Naive thymus-derived CD4-positive, alpha-beta T cell (primary cell): ENCODE measurements at regions of chr1 and their contacts with region 1.

Region 1: DNA sequence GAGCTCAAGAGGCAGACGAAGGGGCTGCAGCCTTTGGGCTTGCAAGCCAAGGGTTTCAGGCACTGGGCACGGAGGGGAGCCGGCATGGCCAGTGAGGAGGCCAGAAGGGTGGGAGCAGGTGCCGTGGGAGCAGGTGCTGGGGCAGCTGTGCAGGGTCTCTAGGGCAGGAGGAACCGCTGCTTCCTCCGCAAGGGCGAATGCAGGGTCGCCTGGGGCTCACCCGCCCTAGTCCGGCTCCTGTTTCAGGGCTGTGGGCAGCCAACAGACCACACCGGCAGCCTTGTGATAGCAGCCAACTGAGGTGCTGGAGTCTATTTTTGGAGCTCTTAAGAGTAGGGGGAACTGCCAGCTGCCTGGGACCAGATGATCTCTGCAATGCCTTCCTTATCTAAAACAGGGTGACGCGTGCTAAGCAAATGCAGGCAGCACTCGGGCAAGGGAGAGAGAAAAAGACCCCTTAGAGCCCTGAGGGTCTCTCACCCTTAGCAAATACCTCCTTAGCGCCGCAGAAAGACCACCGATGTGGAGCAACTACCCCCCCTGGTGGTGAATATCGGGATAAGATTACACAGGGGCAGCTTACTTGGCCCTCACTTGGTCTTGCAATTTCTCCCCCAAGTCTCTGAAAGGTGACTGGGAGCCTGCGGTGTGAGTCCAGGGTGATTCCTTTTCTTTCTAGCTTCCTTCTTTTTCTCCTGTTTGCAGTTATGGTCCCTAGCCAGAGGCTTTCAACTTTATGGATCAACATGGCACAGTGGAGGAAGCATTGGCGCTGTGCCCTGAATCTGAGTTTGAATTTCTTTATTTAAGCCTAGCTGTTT is 20.7 kb upstream of the MAPKAPK2 start:
- DNase-seq: peak; percentile 44 to 83 (median 68)
- ATAC-seq: peak; percentile 87
- H3K4me3 ChIP-seq: no peak overlapping the region
- H3K4me3 Mint-ChIP-seq: peak overlapping the region in 4 of 10 donors; percentile 19 to 63 (median 41)
- H3K27ac ChIP-seq: no peak overlapping the region
- H3K27ac Mint-ChIP-seq: peak overlapping the region in 1 of 9 donors; percentile 15
- H3K4me1 ChIP-seq: peaks cover 0 to 9% of the 10 kb centered on the region in 2 donors
- H3K4me1 Mint-ChIP-seq: peaks cover 3 to 35% (median 9%) of the 10 kb centered on the region in 7 donors
- H3K27me3 ChIP-seq: peaks cover 0 to 6% of the 10 kb centered on the region in 2 donors
- H3K27me3 Mint-ChIP-seq: peaks cover 8 to 31% (median 21%) of the 10 kb centered on the region in 5 donors

Region 2: DNA sequence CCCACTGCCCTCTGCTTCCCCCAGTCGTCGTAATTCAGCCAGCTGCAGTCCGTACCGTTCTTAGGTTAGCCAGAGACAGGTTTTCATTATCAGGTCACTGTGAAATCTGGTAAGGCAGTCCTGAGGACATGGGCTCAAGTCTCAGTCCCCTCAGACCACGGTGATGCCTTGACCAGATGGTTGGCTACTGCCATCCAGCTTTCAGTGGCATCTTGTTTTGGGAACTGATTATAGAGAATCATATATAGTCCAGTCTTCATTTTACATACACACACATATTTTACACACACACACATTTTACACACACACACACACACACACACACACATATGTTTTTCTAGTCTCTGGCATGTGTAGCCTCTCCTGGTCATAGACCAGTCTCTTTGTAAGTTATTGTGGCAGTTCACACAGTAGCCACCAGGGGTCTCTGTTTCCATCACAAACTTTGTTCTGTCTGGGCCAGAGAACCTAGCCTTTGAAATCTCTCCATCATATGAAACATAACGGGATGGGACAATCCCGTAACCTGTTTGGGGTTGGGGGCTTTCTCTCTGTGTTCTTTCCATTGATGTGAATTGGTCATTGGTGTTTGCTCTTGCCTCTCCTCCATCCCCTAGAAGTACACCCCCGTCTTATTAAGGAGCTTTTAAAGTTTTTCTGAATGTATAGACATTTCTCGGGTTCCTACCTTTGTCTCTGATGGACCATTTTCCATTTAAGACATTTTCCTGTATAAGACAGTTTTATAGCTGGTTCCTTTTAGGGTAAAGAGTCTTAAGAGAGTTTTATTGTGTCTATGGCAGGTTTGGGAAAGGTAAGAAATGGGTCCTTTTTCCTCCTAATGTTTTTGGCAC is 202.2 kb before region 1 on chr1:
- CTCF ChIA-PET with region 1: interaction called, 23 read pairs
- POLR2A ChIA-PET with region 1: interaction called, 3 read pairs
- intact Hi-C with region 1: loop called in 1 of 2 experiments (anchors 1 kb)
- DNase-seq: peak in 8 of 9 donors; percentile 59 to 72 (median 66)
- ATAC-seq: peak; percentile 84
- H3K4me3 ChIP-seq: no peak overlapping the region
- H3K4me3 Mint-ChIP-seq: peak overlapping the region in 1 of 10 donors; percentile 38
- H3K27ac ChIP-seq: no peak overlapping the region
- H3K27ac Mint-ChIP-seq: peak overlapping the region in 1 of 9 donors; percentile 38
- H3K4me1 ChIP-seq: peaks cover 10 to 16% of the 10 kb centered on the region in 2 donors
- H3K4me1 Mint-ChIP-seq: peaks cover 20 to 48% (median 31%) of the 10 kb centered on the region in 7 donors
- H3K27me3 ChIP-seq: no peaks in the 10 kb centered on the region
- H3K27me3 Mint-ChIP-seq: no peaks in the 10 kb centered on the region

Region 3: DNA sequence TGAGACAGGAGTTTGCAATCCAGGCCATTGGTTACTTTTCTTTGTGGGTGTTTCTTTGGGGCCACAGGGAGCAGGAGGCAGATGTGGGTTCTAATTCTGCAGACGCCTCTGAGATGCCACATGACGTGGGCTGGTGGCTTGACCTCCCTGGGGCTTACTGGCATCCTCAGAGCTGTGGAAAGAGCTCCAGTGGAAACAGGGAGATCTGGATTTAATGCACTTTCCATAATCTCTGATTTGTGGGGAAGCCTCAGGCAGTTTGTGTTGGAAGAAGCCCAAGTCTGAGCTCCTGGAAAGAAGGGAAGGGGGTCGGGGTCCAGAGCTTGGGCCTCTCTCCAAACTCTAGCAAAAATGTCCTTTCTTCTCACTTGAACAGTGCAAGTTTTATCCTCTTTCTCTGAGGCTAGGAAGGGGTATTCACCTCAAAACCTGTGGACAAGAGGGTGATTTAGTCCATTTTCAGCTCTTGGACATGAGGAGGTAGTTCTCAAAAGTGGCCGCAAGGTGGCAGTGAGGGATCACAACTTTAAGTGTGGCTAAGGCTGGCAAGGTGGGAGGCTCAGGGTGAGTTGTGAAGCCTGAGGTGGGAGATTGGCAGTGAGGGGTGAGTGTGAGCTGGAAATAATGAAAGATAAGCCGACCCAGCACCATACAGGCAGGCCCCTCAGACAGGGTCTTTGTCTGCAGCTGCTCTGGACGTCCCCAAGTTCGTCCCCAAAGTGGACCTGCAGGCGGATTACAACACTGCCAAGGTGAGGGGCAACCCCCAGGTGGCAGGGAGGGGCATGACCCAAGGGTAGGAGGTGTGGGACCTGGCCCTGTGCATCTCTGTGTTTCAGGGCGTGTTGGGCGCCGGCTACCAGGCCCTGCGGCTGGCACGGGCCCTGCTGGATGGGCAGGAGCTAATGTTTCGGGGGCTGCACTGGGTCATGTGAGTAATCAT is 184.6 kb before region 1 on chr1:
- CTCF ChIA-PET with region 1: interaction called, 24 read pairs
- POLR2A ChIA-PET with region 1: interaction called, 3 read pairs
- intact Hi-C with region 1: loop called in 1 of 2 experiments (anchors 1 kb)
- DNase-seq: peak in 8 of 9 donors; percentile 43 to 65 (median 56)
- ATAC-seq: peak; percentile 84
- H3K4me3 ChIP-seq: no peak overlapping the region
- H3K4me3 Mint-ChIP-seq: no peak overlapping the region
- H3K27ac ChIP-seq: no peak overlapping the region
- H3K27ac Mint-ChIP-seq: peak overlapping the region; percentile 20 to 85 (median 66)
- H3K4me1 ChIP-seq: peaks cover 0 to 11% of the 10 kb centered on the region in 2 donors
- H3K4me1 Mint-ChIP-seq: peaks cover 8 to 24% (median 17%) of the 10 kb centered on the region in 7 donors
- H3K27me3 ChIP-seq: no peaks in the 10 kb centered on the region
- H3K27me3 Mint-ChIP-seq: no peaks in the 10 kb centered on the region

Region 4: DNA sequence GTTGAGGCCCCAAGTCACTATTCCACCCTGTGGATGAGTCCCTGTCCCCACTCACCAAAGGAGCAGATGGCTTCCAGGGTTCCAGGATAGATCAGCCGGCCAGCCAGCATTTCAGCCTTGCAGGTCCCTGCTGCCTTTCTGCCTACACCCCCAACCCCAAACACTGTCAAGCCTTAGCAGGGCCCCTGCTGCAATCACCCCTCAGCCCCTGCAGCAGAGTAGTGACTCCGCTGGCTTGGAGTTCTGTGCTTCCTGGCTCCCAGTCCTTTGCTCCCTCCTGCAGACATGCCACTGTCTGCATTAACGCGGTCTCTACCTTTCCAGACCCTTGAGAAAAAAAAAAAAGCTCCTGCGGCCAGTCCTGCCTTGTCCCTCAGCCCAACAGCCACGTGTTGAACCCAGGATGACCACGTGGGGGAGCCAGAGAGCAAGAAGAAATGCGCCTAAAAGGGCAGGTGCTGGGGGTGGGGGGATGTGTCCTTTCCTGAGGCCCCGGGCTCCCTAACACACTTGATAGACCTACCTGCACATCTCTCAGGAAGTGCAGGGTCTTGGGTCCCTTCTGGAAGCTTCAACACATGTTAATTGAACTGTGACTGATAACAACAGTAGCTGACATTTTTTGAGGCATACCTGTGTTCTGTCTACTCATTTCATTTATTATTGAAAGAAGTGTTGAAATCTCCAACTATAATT is 119.3 kb before region 1 on chr1:
- CTCF ChIA-PET with region 1: interaction called, 20 read pairs
- POLR2A ChIA-PET with region 1: no interaction called
- intact Hi-C with region 1: loop called (anchors 1 to 2 kb)
- DNase-seq: peak; percentile 58 to 86 (median 77)
- ATAC-seq: peak; percentile 94
- H3K4me3 ChIP-seq: no peak overlapping the region
- H3K4me3 Mint-ChIP-seq: no peak overlapping the region
- H3K27ac ChIP-seq: no peak overlapping the region
- H3K27ac Mint-ChIP-seq: peak overlapping the region in 7 of 9 donors; percentile 17 to 63 (median 49)
- H3K4me1 ChIP-seq: peaks cover 4 to 9% of the 10 kb centered on the region in 2 donors
- H3K4me1 Mint-ChIP-seq: peaks cover 12 to 26% (median 19%) of the 10 kb centered on the region in 7 donors
- H3K27me3 ChIP-seq: no peaks in the 10 kb centered on the region
- H3K27me3 Mint-ChIP-seq: no peaks in the 10 kb centered on the region

Region 5: GRCh38 chr1:206600527-206600926 is 63.5 kb before region 1 on chr1:
- CTCF ChIA-PET with region 1: no interaction called
- POLR2A ChIA-PET with region 1: no interaction called
- intact Hi-C with region 1: no loop called
- DNase-seq: no peak
- ATAC-seq: no peak
- H3K4me3 ChIP-seq: no peak overlapping the region
- H3K4me3 Mint-ChIP-seq: no peak overlapping the region
- H3K27ac ChIP-seq: no peak overlapping the region
- H3K27ac Mint-ChIP-seq: no peak overlapping the region
- H3K4me1 ChIP-seq: no peaks in the 10 kb centered on the region
- H3K4me1 Mint-ChIP-seq: peaks cover 0 to 4% (median 0%) of the 10 kb centered on the region in 7 donors
- H3K27me3 ChIP-seq: no peaks in the 10 kb centered on the region
- H3K27me3 Mint-ChIP-seq: no peaks in the 10 kb centered on the region

Region 6: DNA sequence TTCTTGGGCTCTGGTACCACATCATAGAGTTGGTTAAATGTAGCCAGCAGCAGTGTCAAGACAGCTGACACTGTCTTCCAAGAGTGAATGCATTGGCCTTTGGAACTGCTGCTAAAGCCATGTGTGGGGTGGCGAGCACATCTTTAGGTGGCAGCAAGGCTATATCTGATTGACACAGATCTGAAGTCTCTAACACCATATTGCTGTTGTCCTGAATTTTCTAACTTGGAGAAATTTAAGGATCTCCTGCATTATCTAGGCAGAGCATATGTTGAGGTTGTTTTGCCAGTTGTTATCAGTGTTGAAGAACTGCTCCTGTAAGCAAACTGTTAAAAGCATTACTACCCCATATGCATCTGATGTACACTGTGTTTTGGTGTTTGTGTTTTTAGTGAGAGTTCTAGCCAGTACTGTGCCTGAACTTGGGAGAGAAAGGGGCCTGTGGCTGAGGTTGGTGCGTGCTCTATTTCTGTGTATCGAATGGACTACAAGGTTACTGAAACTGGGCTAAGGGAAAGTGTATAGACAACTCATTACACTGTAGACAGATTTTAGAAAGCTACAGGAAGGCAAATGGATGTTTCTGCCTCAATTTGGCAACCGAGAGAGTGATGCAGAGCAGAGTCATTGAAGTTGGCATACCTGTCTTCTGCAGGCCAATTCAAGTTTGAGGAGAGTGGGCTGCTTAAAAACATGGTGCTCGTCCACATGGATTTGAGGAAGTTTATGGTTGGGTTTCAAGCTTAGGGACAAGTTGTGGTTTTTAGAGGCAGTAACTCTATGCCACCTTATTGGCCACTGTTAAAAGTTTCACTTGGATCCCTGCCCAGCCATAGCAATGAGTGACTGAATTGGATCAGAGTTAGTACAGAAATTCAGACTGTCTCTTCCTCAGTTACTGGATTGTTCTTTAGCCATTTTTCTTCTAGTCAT is 11.8 kb before region 1 on chr1:
- CTCF ChIA-PET with region 1: interaction called, 19 read pairs
- POLR2A ChIA-PET with region 1: no interaction called
- intact Hi-C with region 1: no loop called
- DNase-seq: no peak
- ATAC-seq: no peak
- H3K4me3 ChIP-seq: no peak overlapping the region
- H3K4me3 Mint-ChIP-seq: no peak overlapping the region
- H3K27ac ChIP-seq: no peak overlapping the region
- H3K27ac Mint-ChIP-seq: no peak overlapping the region
- H3K4me1 ChIP-seq: no peaks in the 10 kb centered on the region
- H3K4me1 Mint-ChIP-seq: peaks cover 0 to 2% (median 0%) of the 10 kb centered on the region in 7 donors
- H3K27me3 ChIP-seq: no peaks in the 10 kb centered on the region
- H3K27me3 Mint-ChIP-seq: peaks cover under 1 to 9% (median 4%) of the 10 kb centered on the region in 5 donors